ENCODE measurements at regions of chr2 and their contacts with region 1.

Region 1: DNA sequence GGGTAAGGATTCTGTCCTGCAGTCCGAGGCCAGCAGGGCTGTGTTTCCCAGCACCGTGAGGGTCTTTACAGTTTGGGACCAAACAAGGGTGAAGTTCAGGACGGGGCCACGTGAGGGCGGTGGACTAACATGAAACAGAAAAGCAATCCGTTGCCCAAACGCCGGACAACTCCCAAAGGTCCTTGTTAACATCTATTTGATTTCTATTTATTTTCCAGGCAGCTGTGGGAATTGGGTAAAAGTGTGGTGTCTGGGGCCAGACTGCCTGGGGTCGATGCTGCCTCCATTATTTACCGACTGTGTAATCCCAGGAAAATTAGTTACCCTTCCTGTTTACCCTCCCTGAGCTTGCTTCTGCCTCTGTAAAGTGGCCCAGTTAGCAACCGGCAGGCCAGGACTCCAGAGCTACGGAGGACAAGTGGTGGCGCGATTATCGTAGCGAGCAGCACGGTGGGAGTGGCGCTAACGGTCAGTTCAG is 66.3 kb upstream of the TCF7L1 start:
- DNase-seq: peak; percentile 78
- ATAC-seq: peak; percentile 79

Region 2: GRCh38 chr2:85302121-85302520 is 235.2 kb after region 1 on chr2:
- intact Hi-C with region 1: loop called (anchors 1 kb)
- DNase-seq: no peak
- ATAC-seq: peak; percentile 45

Measured in Right ventricle myocardium inferior (tissue), 1 donor.